ENCODE measurements at regions of chr22 and their contacts with region 1.

Region 1: DNA sequence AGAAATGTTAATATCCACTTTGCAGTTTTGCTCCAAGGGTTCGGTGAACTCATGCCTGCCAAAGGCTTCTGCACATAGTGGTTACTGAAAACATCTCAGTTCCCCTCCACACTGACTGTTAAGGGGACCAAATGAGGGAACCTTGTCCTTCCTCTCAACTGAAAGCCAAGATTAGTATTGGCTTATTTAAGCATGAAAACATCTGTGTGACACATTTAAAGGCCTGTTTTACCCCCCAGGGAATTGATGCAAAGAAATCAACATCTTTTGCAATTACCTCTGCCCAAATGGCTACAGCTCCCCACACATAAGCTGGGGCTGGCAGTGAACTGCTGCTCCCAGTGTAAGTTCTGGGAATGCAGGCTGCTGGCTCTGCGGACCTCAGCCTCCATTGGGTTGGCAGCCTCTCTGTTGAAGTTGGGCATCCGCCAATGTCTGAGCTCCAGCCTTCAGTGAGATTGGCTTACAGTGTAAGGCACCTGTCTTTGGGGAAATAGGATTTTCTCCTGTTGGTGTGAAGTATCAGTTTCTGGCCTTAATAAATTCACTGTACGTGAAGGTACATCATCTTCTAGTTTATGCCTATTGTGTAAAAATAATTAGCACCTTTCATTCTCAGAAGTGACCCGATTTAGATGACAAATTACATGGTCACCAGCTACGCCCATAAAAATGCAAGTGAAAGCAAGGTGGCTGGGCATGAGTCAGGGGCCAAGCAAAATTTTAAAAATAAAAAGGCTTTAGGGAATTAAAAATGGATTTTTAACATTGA is 213.4 kb upstream of the SYN3 start:
- DNase-seq: peak; percentile 95
- ATAC-seq: peak; percentile 86
- H3K4me3 ChIP-seq: peak overlapping the region; percentile 3; the same call in 1 of the 2 replicates
- H3K27ac ChIP-seq: peak overlapping the region; percentile 88
- H3K4me1 ChIP-seq: peaks cover 56% of the 10 kb centered on the region
- H3K27me3 ChIP-seq: no peaks in the 10 kb centered on the region
- CTCF ChIP-seq: no peak
- EP300 ChIP-seq: peak; percentile 61 to 86; a peak in 3 of 4 replicates
- POLR2A ChIP-seq: no peak
- RAD21 ChIP-seq: 0 out of 2 replicates have a peak, but pooled peaks have one; percentile 0

Region 2: GRCh38 chr22:33083212-33083611 is 188.4 kb before region 1 on chr22:
- CTCF ChIA-PET with region 1: interaction called, 49 read pairs
- POLR2A ChIA-PET with region 1: no interaction called
- RAD21 ChIA-PET with region 1: interaction called, 5 read pairs
- SMC1A ChIA-PET with region 1: interaction called, 28 read pairs
- in situ Hi-C with region 1: no loop called
- intact Hi-C with region 1: loop called (anchors 1 kb)
- DNase-seq: peak; percentile 13
- ATAC-seq: peak; percentile 80
- H3K4me3 ChIP-seq: no peak overlapping the region
- H3K27ac ChIP-seq: no peak overlapping the region
- H3K4me1 ChIP-seq: no peaks in the 10 kb centered on the region
- H3K27me3 ChIP-seq: no peaks in the 10 kb centered on the region
- CTCF ChIP-seq: peak in 1 of 3 experiments; percentile 36; a peak in 4 of 6 replicates
- EP300 ChIP-seq: no peak
- POLR2A ChIP-seq: no peak
- RAD21 ChIP-seq: 0 out of 2 replicates have a peak, but pooled peaks have one; percentile 25

Region 3: DNA sequence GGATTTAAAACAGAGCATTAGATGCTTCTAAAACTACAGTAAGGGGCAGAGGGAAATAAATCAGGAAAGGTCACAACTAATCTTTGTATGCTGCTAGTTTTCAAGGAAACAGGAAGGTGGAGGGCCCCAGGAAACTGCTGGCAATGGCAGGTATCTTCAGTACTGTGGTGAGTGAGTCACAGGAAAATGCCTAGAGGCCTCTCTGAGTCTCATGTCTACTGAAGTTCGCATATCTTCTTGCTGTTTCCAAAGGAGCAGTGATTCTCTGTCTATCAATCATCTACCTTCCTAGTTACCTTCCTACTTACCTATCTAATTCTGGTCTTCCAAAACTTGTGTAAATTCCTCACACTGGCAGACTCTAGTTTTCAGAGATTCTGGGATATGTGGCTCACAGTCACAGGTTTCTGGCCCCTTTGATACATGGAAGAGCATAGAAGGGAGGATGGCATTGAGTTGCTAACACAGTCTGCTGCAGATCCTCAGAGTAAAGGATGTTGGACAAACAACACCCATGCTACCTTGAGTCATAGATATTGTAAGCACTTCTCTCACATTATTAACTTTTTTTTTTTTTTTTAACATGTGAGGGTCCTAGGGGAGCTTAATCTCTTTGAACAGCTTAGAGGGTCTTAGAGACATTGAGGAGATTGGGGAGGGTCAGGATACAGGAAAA is 154.6 kb before region 1 on chr22:
- CTCF ChIA-PET with region 1: no interaction called
- POLR2A ChIA-PET with region 1: no interaction called
- RAD21 ChIA-PET with region 1: no interaction called
- SMC1A ChIA-PET with region 1: no interaction called
- in situ Hi-C with region 1: no loop called
- intact Hi-C with region 1: no loop called
- DNase-seq: no peak
- ATAC-seq: no peak
- H3K4me3 ChIP-seq: no peak overlapping the region
- H3K27ac ChIP-seq: no peak overlapping the region
- H3K4me1 ChIP-seq: no peaks in the 10 kb centered on the region
- H3K27me3 ChIP-seq: no peaks in the 10 kb centered on the region
- CTCF ChIP-seq: no peak
- EP300 ChIP-seq: no peak
- POLR2A ChIP-seq: no peak
- RAD21 ChIP-seq: no peak

Region 4: DNA sequence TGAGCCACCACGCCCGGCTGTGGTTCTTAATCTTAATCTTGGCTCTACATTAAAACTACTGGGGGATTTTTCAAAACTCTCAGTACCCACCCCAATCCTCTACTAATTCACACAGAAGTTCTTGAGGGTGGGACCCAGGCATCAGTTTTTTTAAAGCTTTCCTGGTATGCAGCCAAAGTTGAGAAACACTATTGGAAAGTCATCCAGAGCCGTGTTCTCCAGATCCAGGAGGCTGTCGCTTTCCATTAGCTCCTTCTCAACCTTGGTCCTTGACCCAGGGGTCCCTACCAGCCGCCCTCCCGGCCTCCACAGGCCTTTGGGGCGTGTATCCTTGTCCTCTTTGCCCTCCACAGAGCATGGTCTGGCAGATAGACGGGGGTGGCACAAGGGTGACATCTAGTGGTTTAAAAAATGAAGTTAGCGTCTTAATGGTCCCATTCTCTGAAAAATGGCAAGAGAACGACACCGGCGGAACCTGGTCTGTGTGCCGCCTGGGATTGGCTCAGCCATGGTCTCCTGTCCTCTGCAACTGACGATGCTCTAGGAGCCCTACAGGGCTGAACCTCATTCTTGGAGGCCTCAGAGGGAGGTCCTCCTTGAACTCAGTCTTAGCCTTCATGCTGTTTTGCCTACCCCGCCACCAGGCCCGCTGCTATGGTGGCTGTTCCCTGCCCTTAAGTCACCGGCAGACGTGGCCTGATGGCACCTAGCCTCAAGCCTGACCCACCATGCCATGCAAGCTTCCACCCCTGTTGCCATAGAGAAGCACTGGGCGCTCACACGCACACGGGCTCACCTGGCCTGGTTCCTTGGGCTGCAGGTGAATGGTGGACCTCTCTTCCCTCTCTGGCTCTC is 61.4 kb before region 1 on chr22:
- CTCF ChIA-PET with region 1: interaction called, 75 read pairs
- POLR2A ChIA-PET with region 1: no interaction called
- RAD21 ChIA-PET with region 1: interaction called, 47 read pairs
- SMC1A ChIA-PET with region 1: interaction called, 62 read pairs
- in situ Hi-C with region 1: no loop called
- intact Hi-C with region 1: loop called (anchors 2 kb)
- DNase-seq: no peak
- ATAC-seq: peak; percentile 98
- H3K4me3 ChIP-seq: no peak overlapping the region
- H3K27ac ChIP-seq: no peak overlapping the region
- H3K4me1 ChIP-seq: no peaks in the 10 kb centered on the region
- H3K27me3 ChIP-seq: no peaks in the 10 kb centered on the region
- CTCF ChIP-seq: peak; percentile 69 to 72 (median 70)
- EP300 ChIP-seq: no peak
- POLR2A ChIP-seq: no peak
- RAD21 ChIP-seq: peak; percentile 77

Region 5: DNA sequence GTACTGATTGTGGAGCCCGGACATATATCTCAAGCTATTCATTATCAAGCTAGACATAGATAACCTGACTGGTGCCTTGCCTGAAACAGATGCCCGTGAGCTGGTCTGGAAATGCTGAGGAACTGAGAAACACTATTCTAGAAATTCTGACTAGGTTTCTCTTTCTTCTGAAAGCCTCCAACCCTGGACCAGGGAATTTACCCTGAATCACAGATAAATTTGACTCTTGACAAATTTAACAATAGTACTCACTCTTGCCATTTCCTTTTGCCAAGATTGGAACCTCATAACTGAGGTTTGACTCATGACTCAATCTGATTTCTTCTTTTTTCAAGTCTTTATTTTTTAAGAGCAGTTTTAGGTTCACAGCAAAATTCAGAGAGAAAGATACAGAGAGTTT is 23.8 kb before region 1 on chr22:
- CTCF ChIA-PET with region 1: interaction called, 48 read pairs
- POLR2A ChIA-PET with region 1: interaction called, 11 read pairs
- RAD21 ChIA-PET with region 1: interaction called, 40 read pairs
- SMC1A ChIA-PET with region 1: interaction called, 83 read pairs
- in situ Hi-C with region 1: no loop called
- intact Hi-C with region 1: loop called (anchors 1 kb)
- DNase-seq: peak; percentile 81
- ATAC-seq: peak; percentile 89
- H3K4me3 ChIP-seq: no peak overlapping the region
- H3K27ac ChIP-seq: peak overlapping the region; percentile 67
- H3K4me1 ChIP-seq: peaks cover 20% of the 10 kb centered on the region
- H3K27me3 ChIP-seq: no peaks in the 10 kb centered on the region
- CTCF ChIP-seq: no peak
- EP300 ChIP-seq: 0 out of 4 replicates have a peak, but pooled peaks of 1 of the 2 experiments have one; percentile 35
- POLR2A ChIP-seq: no peak
- RAD21 ChIP-seq: no peak

Region 6: GRCh38 chr22:33472462-33473344 is 201.1 kb after region 1 on chr22:
- CTCF ChIA-PET with region 1: interaction called, 3 read pairs
- POLR2A ChIA-PET with region 1: interaction called, 5 read pairs
- RAD21 ChIA-PET with region 1: interaction called, 11 read pairs
- SMC1A ChIA-PET with region 1: interaction called, 17 read pairs
- in situ Hi-C with region 1: no loop called
- intact Hi-C with region 1: no loop called
- DNase-seq: peak; percentile 78
- ATAC-seq: peak; percentile 79
- H3K4me3 ChIP-seq: peak overlapping the region; percentile 26; the same call in 1 of the 2 replicates
- H3K27ac ChIP-seq: peak overlapping the region; percentile 99
- H3K4me1 ChIP-seq: peaks cover 42% of the 10 kb centered on the region
- H3K27me3 ChIP-seq: no peaks in the 10 kb centered on the region
- CTCF ChIP-seq: no peak
- EP300 ChIP-seq: peak; percentile 99 to 100
- POLR2A ChIP-seq: no peak
- RAD21 ChIP-seq: no peak